T-cell (primary cell): ENCODE measurements at regions of chr20 and their contacts with region 1.

Region 1: DNA sequence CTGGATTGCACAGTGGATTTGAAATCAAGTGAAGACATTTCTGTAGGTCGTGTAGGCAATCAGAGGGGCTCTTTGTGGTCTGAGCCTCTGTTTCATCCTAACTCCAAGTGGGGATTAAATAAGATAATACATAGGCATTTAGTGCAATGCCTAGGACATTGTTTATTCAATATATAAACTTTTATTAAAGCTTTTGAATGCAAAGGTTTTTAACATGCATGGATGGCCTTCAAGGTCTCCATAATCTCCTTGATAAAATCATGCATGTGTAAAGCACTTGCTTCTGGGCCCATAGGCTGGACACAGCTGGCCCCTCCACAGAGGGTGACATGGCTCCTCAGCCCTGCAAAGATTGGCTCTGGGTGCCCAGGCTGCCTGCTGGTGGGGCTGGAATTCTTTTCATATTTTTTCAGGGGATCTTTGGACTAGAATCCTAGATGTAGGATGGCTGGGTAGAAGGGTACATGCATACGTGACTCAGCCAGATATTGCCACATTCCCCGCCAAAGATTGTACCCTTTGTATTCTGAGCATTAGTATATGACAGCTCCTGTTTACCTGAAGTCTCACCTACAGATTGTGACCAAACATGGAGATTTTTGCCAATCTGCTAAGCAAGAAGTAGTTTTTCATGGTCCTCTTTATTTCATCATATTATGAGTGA is 19.0 kb upstream of the AVP start:
- DNase-seq: no peak
- ATAC-seq: no peak
- H3K4me3 ChIP-seq: no peak overlapping the region
- H3K4me3 Mint-ChIP-seq: peak overlapping the region in 1 of 3 donors; percentile 45
- H3K27ac ChIP-seq: no peak overlapping the region
- H3K27ac Mint-ChIP-seq: peak overlapping the region; percentile 57 to 80
- H3K4me1 ChIP-seq: peaks cover 5 to 22% of the 10 kb centered on the region in 2 experiments
- H3K4me1 Mint-ChIP-seq: peaks cover 18 to 29% (median 18%) of the 10 kb centered on the region in 3 donors
- H3K27me3 ChIP-seq: peaks cover 0 to 19% of the 10 kb centered on the region in 2 experiments
- H3K27me3 Mint-ChIP-seq: no peaks in the 10 kb centered on the region

Region 2: DNA sequence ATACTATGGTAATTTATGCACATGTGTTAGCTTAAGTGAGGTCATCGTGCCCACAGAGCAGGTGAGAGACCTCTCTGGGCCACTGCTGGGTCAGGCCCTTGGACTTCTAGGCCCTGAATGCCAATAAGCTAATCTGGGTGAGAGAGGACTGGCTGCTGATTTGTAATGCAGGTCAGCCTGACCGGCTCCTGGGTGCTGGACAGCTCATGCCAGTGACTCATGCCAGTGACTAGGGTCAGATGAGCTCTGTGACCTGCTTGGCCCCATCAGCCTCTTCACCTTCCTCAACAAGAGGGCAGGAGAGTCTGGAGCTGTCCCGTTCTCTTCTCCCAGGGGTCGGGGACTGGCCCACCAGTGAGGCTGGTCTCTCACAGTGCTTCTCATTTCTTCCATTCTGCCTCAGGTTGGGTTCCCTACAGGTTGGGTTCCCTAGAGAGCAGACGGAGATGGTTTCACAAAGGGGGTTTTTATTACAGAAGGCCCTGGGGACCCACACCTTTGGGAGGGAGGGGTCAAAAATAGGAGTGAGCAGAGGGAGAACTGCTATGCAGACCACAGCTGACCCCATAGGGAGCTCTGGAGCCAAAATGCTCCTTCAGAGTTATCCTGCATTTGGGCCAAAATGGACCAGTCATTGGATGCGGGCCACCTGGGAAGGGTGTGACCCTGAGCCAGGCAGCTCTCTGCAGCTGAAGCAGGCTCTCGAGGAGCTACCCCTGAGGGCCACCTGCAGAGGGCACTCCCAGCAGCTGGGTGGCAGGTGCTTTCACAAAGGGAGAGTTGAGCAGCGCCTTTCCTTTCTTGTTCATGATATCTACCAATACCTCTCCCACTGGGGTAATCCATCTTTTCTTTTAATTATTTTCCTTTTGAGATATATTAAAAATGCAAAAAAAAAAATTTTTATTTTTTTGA is 34.3 kb before region 1 on chr20:
- CTCF ChIA-PET with region 1: no interaction called
- POLR2A ChIA-PET with region 1: no interaction called
- DNase-seq: peak in 25 of 35 experiments; percentile 26 to 64 (median 50)
- ATAC-seq: peak; percentile 28 to 66 (median 38)
- H3K4me3 ChIP-seq: no peak overlapping the region
- H3K4me3 Mint-ChIP-seq: no peak overlapping the region
- H3K27ac ChIP-seq: no peak overlapping the region
- H3K27ac Mint-ChIP-seq: no peak overlapping the region
- H3K4me1 ChIP-seq: peaks cover 2 to 17% of the 10 kb centered on the region in 2 experiments
- H3K4me1 Mint-ChIP-seq: peaks cover 14 to 25% (median 21%) of the 10 kb centered on the region in 3 donors
- H3K27me3 ChIP-seq: peaks cover 0 to 15% of the 10 kb centered on the region in 2 experiments
- H3K27me3 Mint-ChIP-seq: no peaks in the 10 kb centered on the region

Region 3: GRCh38 chr20:3082955-3083952 is 20.2 kb before region 1 on chr20:
- CTCF ChIA-PET with region 1: no interaction called
- POLR2A ChIA-PET with region 1: no interaction called
- DNase-seq: no peak
- ATAC-seq: peak; percentile 33 to 54 (median 50)
- H3K4me3 ChIP-seq: peak overlapping the region in 1 of 2 donors; percentile 23
- H3K4me3 Mint-ChIP-seq: peak overlapping the region; percentile 37 to 78 (median 56)
- H3K27ac ChIP-seq: no peak overlapping the region
- H3K27ac Mint-ChIP-seq: no peak overlapping the region
- H3K4me1 ChIP-seq: peaks cover 0 to 13% of the 10 kb centered on the region in 2 experiments
- H3K4me1 Mint-ChIP-seq: peaks cover 7 to 15% (median 11%) of the 10 kb centered on the region in 3 donors
- H3K27me3 ChIP-seq: peaks cover 0 to 49% of the 10 kb centered on the region in 2 experiments
- H3K27me3 Mint-ChIP-seq: peaks cover 18 to 47% of the 10 kb centered on the region in 2 donors

Region 4: DNA sequence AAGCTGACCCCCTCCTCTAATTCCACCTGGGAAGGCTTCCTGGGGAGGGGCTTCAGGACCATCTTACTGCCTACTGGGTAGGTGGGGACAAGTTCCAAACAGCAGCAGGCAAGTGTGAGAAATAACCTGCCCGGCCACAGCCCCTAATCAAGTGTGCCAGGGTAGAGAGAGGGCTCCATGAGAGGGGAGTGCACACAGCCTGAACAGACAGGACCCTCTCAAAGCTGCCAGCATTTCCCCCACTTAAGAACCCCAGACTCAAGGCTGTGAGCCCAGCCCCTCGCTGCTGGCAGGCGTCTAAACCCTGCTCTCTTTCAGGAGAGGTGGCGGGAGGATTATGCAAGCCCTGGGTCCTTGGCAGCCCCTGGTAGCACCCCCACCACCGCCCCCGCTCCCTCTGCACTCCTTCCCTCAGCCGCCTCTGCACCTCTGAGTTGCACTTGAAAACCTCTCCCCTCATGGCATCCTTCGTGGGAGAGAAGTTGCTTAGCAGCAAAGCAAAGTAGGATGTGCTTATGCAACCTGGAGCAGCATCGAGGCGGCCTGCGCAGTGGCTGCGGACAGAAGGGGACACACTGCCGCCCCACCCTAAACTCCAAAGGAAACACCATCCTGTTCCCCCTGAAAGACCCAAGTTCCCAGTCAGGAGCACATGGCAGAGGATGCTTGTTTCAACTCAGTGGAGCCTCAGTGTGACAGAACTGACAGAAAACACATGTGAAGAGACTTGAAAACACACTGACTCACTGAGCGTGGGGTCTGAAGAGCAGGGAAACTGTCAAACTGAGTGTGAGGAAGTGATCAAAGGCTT is 90.5 kb after region 1 on chr20:
- CTCF ChIA-PET with region 1: no interaction called
- POLR2A ChIA-PET with region 1: no interaction called
- DNase-seq: no peak
- ATAC-seq: no peak
- H3K4me3 ChIP-seq: no peak overlapping the region
- H3K4me3 Mint-ChIP-seq: no peak overlapping the region
- H3K27ac ChIP-seq: no peak overlapping the region
- H3K27ac Mint-ChIP-seq: no peak overlapping the region
- H3K4me1 ChIP-seq: no peaks in the 10 kb centered on the region
- H3K4me1 Mint-ChIP-seq: peaks cover 0 to 17% (median 7%) of the 10 kb centered on the region in 3 donors
- H3K27me3 ChIP-seq: no peaks in the 10 kb centered on the region
- H3K27me3 Mint-ChIP-seq: no peaks in the 10 kb centered on the region

Region 5: DNA sequence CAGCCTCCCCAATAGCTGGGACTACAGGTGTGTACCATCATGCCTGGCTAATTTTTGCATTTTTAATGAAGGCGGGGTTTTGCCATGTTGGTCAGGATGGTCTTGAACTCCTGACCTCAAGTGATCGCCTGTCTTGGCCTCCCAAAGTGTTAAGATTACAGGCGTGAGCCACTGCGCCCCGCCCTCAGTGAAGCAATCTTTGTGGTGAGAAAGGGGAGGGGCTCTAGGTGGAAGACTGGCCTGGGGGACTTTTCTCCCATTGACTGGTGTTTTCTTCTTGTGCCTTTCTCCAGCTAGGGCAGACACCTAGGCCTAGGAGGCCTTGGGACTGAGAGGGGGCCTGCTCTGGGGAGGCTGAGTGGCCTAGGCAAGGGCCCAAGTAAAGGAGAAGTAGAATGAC is 219.9 kb after region 1 on chr20:
- CTCF ChIA-PET with region 1: no interaction called
- POLR2A ChIA-PET with region 1: interaction called in 1 of 2 experiments, 10 read pairs
- DNase-seq: peak in 1 of 35 experiments; percentile 6
- ATAC-seq: no peak
- H3K4me3 ChIP-seq: no peak overlapping the region
- H3K4me3 Mint-ChIP-seq: no peak overlapping the region
- H3K27ac ChIP-seq: no peak overlapping the region
- H3K27ac Mint-ChIP-seq: no peak overlapping the region
- H3K4me1 ChIP-seq: peaks cover 7 to 14% of the 10 kb centered on the region in 2 experiments
- H3K4me1 Mint-ChIP-seq: peaks cover 8 to 23% (median 12%) of the 10 kb centered on the region in 3 donors
- H3K27me3 ChIP-seq: no peaks in the 10 kb centered on the region
- H3K27me3 Mint-ChIP-seq: no peaks in the 10 kb centered on the region

Region 6: DNA sequence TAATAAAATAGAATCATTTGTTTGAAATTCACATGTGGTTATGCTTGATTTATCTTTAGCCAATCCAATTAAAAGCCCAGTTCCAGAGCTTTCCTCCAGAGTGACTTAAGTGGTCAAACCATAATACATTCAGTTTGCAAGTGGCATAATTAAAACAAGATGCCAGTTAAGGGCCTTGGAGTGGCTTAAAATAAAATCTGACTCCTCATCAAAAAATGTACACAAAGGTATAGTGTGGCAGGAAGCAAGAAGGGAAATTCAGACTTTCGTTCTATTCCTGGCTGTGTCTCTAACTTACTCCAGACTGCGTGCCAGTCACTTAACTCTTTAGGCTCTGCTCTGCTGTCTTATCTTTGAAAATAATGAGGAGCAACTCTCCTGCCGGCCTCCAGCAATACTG is 1366.9 kb after region 1 on chr20:
- CTCF ChIA-PET with region 1: no interaction called
- POLR2A ChIA-PET with region 1: no interaction called
- DNase-seq: no peak
- ATAC-seq: no peak
- H3K4me3 ChIP-seq: no peak overlapping the region
- H3K4me3 Mint-ChIP-seq: no peak overlapping the region
- H3K27ac ChIP-seq: no peak overlapping the region
- H3K27ac Mint-ChIP-seq: no peak overlapping the region
- H3K4me1 ChIP-seq: no peaks in the 10 kb centered on the region
- H3K4me1 Mint-ChIP-seq: no peaks in the 10 kb centered on the region
- H3K27me3 ChIP-seq: peaks cover 0 to 2% of the 10 kb centered on the region in 2 experiments
- H3K27me3 Mint-ChIP-seq: peaks cover 18 to 23% of the 10 kb centered on the region in 2 donors